Activated CD8-positive, alpha-beta memory T cell treated with anti-CD3 and anti-CD28 coated beads, Interleukin-2, amount 10 ng/mL, durations not matched to agents 7 days and 5 days (primary cell): ENCODE measurements at regions of chr7 and their contacts with region 1.

Region 1: GRCh38 chr7:129218514-129219062 is 6.2 kb upstream of the AHCYL2 start:
- DNase-seq: peak; percentile 84
- ATAC-seq: peak; percentile 91
- H3K4me3 Mint-ChIP-seq: no peak overlapping the region
- H3K27ac Mint-ChIP-seq: no peak overlapping the region
- H3K4me1 Mint-ChIP-seq: peaks cover 17% of the 10 kb centered on the region
- H3K27me3 Mint-ChIP-seq: peaks cover 9% of the 10 kb centered on the region

Region 2: DNA sequence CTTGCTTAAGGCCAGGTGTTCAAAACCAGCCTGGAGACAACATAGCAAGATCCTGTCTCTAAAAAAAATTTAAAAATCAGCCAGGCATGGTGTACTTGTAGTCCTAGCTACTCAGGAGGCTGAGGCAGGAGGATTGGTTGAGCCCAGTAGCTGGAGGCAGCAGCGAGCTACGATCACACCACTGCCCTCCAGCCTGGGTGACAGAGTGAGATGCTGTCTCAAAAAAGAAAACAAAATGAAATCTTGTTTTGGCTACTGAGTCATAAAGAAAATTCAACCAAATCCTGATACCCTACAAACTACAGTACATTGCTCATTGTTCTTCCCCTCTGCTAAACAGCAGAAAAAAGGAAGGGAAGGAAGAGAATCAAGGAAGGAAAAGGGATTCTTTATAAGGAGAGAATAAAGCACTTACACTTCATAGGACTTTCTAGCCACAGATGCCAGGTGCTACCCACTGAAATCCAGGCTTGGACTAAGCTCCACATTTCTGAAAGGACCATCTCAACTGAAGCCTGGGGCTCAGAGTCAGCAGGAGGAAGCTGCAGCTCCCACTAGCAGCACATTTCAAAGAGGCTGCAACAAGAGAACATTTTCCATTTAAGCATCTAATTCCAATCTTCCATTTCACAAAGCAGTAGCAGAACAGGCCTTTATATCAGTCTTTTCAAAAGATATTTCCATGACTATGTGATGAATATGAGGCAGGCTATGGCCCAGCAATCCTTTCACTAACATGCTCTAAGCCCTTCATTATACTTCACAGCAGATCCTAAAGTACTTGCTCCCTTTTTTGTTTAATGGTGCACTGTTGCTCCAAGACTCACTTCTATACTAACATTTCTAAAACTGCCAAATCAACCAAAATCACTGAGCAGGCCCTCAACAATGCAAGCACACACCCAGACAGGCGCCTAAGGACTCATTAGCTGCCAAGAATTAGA is 177.2 kb before region 1 on chr7:
- CTCF ChIA-PET with region 1: no interaction called
- DNase-seq: no peak
- ATAC-seq: peak; percentile 45
- H3K4me3 Mint-ChIP-seq: no peak overlapping the region
- H3K27ac Mint-ChIP-seq: peak overlapping the region; percentile 63
- H3K4me1 Mint-ChIP-seq: peaks cover 43% of the 10 kb centered on the region
- H3K27me3 Mint-ChIP-seq: no peaks in the 10 kb centered on the region

Region 3: GRCh38 chr7:129072479-129073011 is 146.0 kb before region 1 on chr7:
- CTCF ChIA-PET with region 1: no interaction called
- DNase-seq: peak; percentile 58
- ATAC-seq: peak; percentile 79
- H3K4me3 Mint-ChIP-seq: peak overlapping the region; percentile 36
- H3K27ac Mint-ChIP-seq: peak overlapping the region; percentile 80
- H3K4me1 Mint-ChIP-seq: peaks cover 29% of the 10 kb centered on the region
- H3K27me3 Mint-ChIP-seq: peaks cover 8% of the 10 kb centered on the region

Region 4: DNA sequence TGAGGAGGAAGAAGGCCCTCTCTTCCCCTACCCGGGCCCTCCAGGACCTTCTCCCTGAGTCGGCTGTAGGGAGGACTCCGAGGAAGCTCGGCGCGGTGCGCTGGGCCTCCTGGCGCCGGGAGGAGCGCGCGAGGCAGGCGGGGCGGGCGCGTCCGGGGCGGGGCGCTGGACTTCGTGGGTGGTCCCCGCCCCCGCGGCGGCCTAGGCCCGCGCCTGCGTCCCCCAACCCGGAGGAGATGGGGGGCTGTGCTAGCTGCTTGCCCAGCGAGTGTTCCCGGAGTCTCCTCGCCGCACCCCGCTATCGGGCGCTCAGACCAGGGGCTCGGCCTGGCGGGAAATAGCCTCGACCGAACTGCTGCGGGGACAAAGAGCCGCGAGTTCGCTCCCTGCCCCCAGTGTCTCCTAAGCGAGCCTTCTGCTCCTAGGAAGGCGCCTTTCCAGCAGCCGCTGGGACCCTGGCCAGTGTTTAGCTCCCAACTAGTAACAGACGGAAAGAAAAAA is 49.4 kb before region 1 on chr7:
- CTCF ChIA-PET with region 1: interaction called, 20 read pairs
- DNase-seq: peak; percentile 49
- ATAC-seq: peak; percentile 95
- H3K4me3 Mint-ChIP-seq: peak overlapping the region; percentile 64
- H3K27ac Mint-ChIP-seq: peak overlapping the region; percentile 25
- H3K4me1 Mint-ChIP-seq: peaks cover 15% of the 10 kb centered on the region
- H3K27me3 Mint-ChIP-seq: peaks cover 28% of the 10 kb centered on the region

Region 5: DNA sequence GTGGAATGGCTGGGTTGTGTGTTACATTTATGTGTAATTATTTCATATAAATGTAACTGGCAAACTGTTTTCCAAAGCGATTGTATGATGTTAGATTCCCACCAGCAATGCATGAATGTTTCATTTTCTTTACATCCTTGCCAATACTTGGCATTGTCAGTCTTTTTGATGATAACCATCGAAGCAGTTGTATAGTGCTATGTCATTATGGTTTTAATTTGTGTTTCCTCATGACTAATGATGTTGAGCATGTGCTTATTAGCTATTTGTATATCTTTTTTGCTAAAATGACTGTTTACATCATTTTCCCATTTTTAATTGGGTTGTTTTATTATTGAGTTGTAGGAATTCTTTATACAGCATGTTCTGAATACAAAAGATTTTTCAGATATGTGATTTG is 28.5 kb after region 1 on chr7:
- CTCF ChIA-PET with region 1: interaction called, 13 read pairs
- DNase-seq: no peak
- ATAC-seq: no peak
- H3K4me3 Mint-ChIP-seq: no peak overlapping the region
- H3K27ac Mint-ChIP-seq: no peak overlapping the region
- H3K4me1 Mint-ChIP-seq: no peaks in the 10 kb centered on the region
- H3K27me3 Mint-ChIP-seq: no peaks in the 10 kb centered on the region

Region 6: GRCh38 chr7:129279762-129280161 is 61.2 kb after region 1 on chr7:
- CTCF ChIA-PET with region 1: interaction called, 232 read pairs
- DNase-seq: peak; percentile 45
- ATAC-seq: peak; percentile 51
- H3K4me3 Mint-ChIP-seq: no peak overlapping the region
- H3K27ac Mint-ChIP-seq: no peak overlapping the region
- H3K4me1 Mint-ChIP-seq: peaks cover 10% of the 10 kb centered on the region
- H3K27me3 Mint-ChIP-seq: no peaks in the 10 kb centered on the region

Region 7: DNA sequence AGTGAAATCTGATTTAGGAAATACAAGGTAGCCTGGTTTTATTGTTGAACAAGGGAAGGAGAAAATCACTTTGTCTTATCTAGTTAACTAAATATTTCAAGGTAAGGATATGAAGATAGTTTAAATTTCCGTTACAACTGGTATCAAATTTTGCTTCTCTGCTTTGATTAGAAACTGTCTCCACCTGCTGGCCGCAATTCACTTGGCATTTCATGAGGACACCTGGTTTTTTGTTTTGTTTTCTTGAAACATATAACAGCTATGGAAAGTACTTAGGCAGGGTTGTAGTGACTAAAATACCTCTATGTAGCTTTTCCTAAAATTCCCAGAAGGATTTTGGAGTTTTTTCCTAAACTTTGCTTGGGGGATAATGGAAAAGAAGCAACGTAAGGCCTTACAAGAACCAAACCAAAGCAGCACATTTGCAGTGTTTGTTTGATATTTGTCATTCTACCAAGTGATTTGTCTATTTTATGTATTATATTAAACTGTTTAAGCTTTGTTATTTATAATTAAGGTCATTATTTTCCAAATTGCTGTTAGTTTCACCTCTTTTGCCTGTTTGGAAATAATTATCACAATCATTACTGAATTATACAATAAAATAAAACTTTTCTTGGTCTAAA is 79.8 kb after region 1 on chr7:
- CTCF ChIA-PET with region 1: interaction called, 103 read pairs
- DNase-seq: peak; percentile 73
- ATAC-seq: no peak
- H3K4me3 Mint-ChIP-seq: no peak overlapping the region
- H3K27ac Mint-ChIP-seq: no peak overlapping the region
- H3K4me1 Mint-ChIP-seq: no peaks in the 10 kb centered on the region
- H3K27me3 Mint-ChIP-seq: no peaks in the 10 kb centered on the region

Region 8: GRCh38 chr7:129367700-129368388 is 149.3 kb after region 1 on chr7:
- CTCF ChIA-PET with region 1: interaction called, 13 read pairs
- DNase-seq: peak; percentile 88
- ATAC-seq: peak; percentile 83
- H3K4me3 Mint-ChIP-seq: peak overlapping the region; percentile 70
- H3K27ac Mint-ChIP-seq: peak overlapping the region; percentile 87
- H3K4me1 Mint-ChIP-seq: peaks cover 40% of the 10 kb centered on the region
- H3K27me3 Mint-ChIP-seq: no peaks in the 10 kb centered on the region